Left colon (tissue), 2 donors: ENCODE measurements at regions of chr15 and their contacts with region 1.

Region 1: GRCh38 chr15:71114896-71115554 is at the start of gene THSD4:
- DNase-seq: peak; percentile 65 to 77
- ATAC-seq: peak; percentile 65
- total RNA-seq, gene THSD4: 35.2 to 45.5 TPM

Region 2: GRCh38 chr15:71431345-71432336 is 316.6 kb after region 1 on chr15:
- intact Hi-C with region 1: loop called in 1 of 2 experiments (anchors 5 kb)
- DNase-seq: no peak
- ATAC-seq: no peak

Region 3: DNA sequence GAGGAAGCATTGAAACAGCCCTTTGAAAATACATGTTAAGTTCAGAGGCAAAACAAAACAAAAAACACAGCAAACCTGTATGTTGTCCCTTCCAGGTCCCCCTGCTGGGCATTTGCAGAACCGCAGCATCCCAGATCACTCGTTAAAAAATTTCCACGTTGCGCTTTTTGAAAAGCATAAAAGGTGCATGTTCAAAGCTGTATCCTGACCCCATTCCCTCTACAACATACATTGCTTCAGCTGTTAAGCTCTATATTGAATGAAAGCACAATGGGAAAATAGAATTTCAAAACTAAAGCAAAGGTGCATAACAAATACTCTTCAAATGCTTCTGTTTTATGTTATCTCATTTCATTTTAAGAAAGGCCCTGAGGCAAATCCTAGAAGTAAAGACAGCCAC is 328.5 kb after region 1 on chr15:
- intact Hi-C with region 1: loop called in 1 of 2 experiments (anchors 5 kb)
- DNase-seq: peak in 1 of 2 donors; percentile 76
- ATAC-seq: peak; percentile 43